IMR-90 (cell line): ENCODE measurements at regions of chr9 and their contacts with region 1.

Region 1: DNA sequence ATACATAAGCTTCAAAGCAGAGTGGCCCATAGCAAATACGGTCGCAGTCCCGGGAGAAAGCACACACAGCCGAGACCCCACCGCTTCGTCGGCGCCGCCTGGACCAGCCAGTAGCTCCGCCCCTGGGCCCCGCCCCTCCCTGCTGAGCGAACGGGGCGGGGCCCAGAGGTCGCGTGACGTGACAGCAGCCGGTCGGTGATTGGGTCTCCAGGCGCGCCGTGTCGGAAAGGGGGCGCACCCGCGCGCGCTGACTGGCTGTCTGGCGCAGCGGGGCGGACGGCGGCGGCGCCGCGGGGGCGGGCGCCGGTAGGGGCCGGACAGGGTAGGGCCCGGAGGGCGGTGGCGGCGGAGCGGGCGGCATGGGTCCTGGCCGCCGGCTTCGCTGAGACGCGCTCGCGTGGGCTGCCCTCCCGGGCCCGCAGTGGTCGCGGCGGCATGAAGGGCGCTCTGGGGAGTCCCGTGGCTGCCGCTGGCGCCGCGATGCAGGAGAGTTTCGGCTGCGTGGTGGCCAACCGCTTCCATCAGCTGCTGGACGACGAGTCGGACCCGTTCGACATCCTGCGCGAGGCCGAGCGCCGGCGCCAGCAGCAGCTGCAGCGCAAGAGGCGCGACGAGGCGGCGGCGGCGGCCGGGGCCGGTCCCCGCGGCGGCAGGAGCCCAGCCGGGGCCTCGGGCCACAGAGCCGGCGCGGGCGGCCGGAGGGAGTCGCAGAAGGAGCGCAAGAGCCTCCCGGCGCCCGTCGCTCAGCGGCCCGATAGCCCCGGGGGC is at the start of gene HABP4:
- DNase-seq: peak; percentile 91
- ATAC-seq: peak; percentile 96
- H3K4me3 ChIP-seq: peak within 1 kb of the TSS; percentile 97
- H3K27ac ChIP-seq: peak within 1 kb of the TSS; percentile 74
- H3K4me1 ChIP-seq: peaks cover 5% of the 10 kb centered on the region; the same call in 1 of the 2 replicates
- H3K27me3 ChIP-seq: no peaks in the 10 kb centered on the region
- CTCF ChIP-seq: no peak
- POLR2A ChIP-seq: peak; percentile 76
- RAD21 ChIP-seq: no peak
- total RNA-seq, gene HABP4: 5.2 and 10.3 TPM in 2 replicates

Region 2: GRCh38 chr9:96495341-96495740 is 45.3 kb after region 1 on chr9:
- CTCF ChIA-PET with region 1: interaction called, 3 read pairs
- POLR2A ChIA-PET with region 1: no interaction called
- dilution Hi-C with region 1: no loop called
- in situ Hi-C with region 1: no loop called
- intact Hi-C with region 1: loop called (anchors 5 kb)
- DNase-seq: peak; percentile 95
- ATAC-seq: peak; percentile 82
- H3K4me3 ChIP-seq: no peak overlapping the region
- H3K27ac ChIP-seq: peak overlapping the region; percentile 19; the same call in 1 of the 2 replicates
- H3K4me1 ChIP-seq: peaks cover 18% of the 10 kb centered on the region
- H3K27me3 ChIP-seq: no peaks in the 10 kb centered on the region
- CTCF ChIP-seq: no peak
- POLR2A ChIP-seq: no peak
- RAD21 ChIP-seq: no peak; the same call in 1 of the 2 replicates

Region 3: DNA sequence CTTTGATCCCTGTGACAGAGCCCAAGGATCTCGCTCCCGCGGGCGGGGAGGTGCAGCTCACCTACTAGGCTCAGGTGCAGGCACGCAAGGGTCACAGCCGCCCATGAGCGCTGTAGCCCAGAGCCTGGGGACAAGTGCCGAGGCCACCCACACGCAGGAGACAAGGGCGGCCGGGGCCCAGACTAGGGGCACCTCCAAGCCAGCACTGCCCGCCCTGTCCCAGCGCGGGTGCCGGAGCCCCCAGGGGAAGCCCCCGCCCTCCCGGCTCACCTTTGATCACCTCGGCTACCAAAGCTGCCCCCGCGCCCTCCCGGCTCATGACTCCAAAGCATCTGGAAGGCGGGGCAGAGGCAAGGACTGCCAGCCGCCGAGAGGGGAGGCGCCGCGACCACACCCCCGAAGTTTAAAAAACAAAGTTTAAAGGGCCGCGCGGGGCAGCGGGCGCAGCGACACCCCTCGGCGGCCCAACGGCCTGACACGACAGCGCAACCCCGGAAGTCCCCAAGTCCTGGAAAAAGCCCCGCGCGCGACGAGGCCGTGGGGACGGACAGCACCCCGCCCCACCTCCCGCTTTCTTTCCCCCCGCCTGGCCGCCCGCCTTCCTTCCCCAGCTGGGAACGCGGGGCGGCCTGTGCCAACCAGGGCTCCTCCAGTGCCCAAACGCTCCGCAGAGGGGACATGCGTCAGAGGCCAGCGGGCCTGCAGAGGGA is 116.6 kb after region 1 on chr9:
- CTCF ChIA-PET with region 1: no interaction called
- POLR2A ChIA-PET with region 1: no interaction called
- dilution Hi-C with region 1: no loop called
- in situ Hi-C with region 1: no loop called
- intact Hi-C with region 1: loop called (anchors 5 kb)
- DNase-seq: no peak
- ATAC-seq: peak; percentile 86
- H3K4me3 ChIP-seq: peak overlapping the region; percentile 58
- H3K27ac ChIP-seq: peak overlapping the region; percentile 52
- H3K4me1 ChIP-seq: peaks cover 3% of the 10 kb centered on the region; the same call in 1 of the 2 replicates
- H3K27me3 ChIP-seq: no peaks in the 10 kb centered on the region
- CTCF ChIP-seq: peak; percentile 47
- POLR2A ChIP-seq: no peak
- RAD21 ChIP-seq: peak; percentile 34

Region 4: DNA sequence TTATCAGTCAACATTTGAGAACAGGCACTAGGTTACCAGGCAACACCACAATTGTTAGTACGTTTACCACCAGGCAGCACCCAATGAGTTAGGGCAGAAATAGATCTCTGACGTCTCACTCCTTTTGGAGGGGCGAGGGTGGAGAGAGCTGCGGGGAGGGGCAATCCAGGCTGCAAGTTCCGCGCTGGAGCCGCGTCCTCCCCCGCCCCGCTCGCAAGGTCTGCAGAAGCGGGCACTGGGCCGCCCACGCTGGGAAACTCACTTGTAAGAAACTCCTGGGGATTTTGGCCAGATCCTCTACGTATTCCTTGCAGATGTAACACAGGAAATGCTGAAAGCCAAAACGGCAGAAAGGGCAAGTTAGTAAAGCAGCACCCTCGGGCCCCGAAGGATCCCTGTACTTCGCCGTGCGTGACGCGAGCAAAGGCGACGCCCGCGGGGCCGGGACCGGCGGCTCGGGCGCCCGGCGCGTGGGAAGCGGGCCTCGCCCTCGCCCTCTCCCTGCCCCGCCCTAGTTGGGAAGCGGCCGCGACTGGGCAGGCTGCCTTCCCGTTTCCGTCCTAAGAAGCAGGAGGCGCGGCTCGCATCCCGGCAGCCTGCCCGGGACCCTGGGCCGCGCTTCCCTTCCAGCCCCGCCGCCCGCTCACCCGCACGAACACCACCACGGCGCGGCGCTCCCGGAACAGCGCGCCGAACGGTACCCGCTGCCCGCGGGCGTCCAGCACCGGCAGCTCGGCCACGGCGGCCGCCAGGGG is 204.6 kb after region 1 on chr9:
- CTCF ChIA-PET with region 1: no interaction called
- POLR2A ChIA-PET with region 1: no interaction called
- dilution Hi-C with region 1: no loop called
- in situ Hi-C with region 1: no loop called
- intact Hi-C with region 1: loop called (anchors 2 kb)
- DNase-seq: peak; percentile 86
- ATAC-seq: peak; percentile 80
- H3K4me3 ChIP-seq: peak overlapping the region; percentile 61
- H3K27ac ChIP-seq: peak overlapping the region; percentile 45
- H3K4me1 ChIP-seq: no peaks in the 10 kb centered on the region
- H3K27me3 ChIP-seq: no peaks in the 10 kb centered on the region; the same call in 1 of the 2 replicates
- CTCF ChIP-seq: peak; percentile 24; the same call in 1 of the 2 replicates
- POLR2A ChIP-seq: peak; percentile 12
- RAD21 ChIP-seq: no peak

Region 5: GRCh38 chr9:96738147-96739027 is 288.4 kb after region 1 on chr9:
- CTCF ChIA-PET with region 1: no interaction called
- POLR2A ChIA-PET with region 1: no interaction called
- dilution Hi-C with region 1: no loop called
- in situ Hi-C with region 1: no loop called
- intact Hi-C with region 1: no loop called
- DNase-seq: no peak
- ATAC-seq: no peak
- H3K4me3 ChIP-seq: no peak overlapping the region
- H3K27ac ChIP-seq: no peak overlapping the region
- H3K4me1 ChIP-seq: no peaks in the 10 kb centered on the region
- H3K27me3 ChIP-seq: no peaks in the 10 kb centered on the region
- CTCF ChIP-seq: no peak
- POLR2A ChIP-seq: no peak
- RAD21 ChIP-seq: no peak